CD4-positive, alpha-beta T cell (primary cell): ENCODE measurements at regions of chr9 and their contacts with region 1.

Region 1: GRCh38 chr9:111483862-111484571 is at the start of gene ECPAS:
- DNase-seq: peak; percentile 27 to 83 (median 48)
- ATAC-seq: peak; percentile 60
- H3K4me3 ChIP-seq: peak within 1 kb of the TSS; percentile 95
- H3K4me3 Mint-ChIP-seq: peak within 1 kb of the TSS; percentile 86
- H3K27ac ChIP-seq: peak within 1 kb of the TSS; percentile 62 to 78
- H3K27ac Mint-ChIP-seq: peak within 1 kb of the TSS; percentile 83
- H3K4me1 ChIP-seq: peaks cover 12% of the 10 kb centered on the region
- H3K4me1 Mint-ChIP-seq: peaks cover 26% of the 10 kb centered on the region
- H3K27me3 ChIP-seq: no peaks in the 10 kb centered on the region
- H3K27me3 Mint-ChIP-seq: no peaks in the 10 kb centered on the region
- CTCF ChIP-seq: no peak
- total RNA-seq, gene ECPAS: 36.6 to 37.5 TPM

Region 2: DNA sequence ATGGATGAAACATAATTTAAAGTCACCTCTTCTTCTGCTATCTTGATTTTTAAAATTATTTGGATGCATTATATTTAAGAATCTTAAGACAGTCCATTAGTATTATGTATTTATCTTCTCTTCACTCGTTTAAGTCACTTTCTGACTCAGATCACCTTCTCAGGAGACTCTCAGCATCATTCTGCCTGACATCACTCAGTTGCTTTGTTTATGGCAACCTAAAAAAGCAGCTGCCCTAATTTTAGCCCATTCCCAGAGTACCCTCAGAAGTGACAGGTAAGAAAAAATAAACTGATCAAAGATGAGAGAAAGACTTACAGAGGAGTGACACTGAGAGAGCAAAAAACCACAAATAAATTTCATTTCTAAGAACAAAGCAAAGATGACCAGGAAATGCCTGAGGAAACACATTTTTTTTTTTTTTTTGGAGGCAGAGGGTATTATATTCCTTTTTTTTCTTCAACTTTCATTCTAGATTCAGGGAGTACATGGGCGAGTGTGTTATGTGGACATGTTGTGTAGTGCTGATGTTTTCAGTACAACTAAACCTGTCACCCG is 674.9 kb before region 1 on chr9:
- CTCF ChIA-PET with region 1: no interaction called
- POLR2A ChIA-PET with region 1: no interaction called
- intact Hi-C with region 1: no loop called
- DNase-seq: no peak
- ATAC-seq: no peak
- H3K4me3 ChIP-seq: no peak overlapping the region
- H3K4me3 Mint-ChIP-seq: no peak overlapping the region
- H3K27ac ChIP-seq: no peak overlapping the region
- H3K27ac Mint-ChIP-seq: no peak overlapping the region
- H3K4me1 ChIP-seq: no peaks in the 10 kb centered on the region
- H3K4me1 Mint-ChIP-seq: no peaks in the 10 kb centered on the region
- H3K27me3 ChIP-seq: no peaks in the 10 kb centered on the region
- H3K27me3 Mint-ChIP-seq: peaks cover 6% of the 10 kb centered on the region
- CTCF ChIP-seq: no peak

Region 3: GRCh38 chr9:111294691-111295451 is 189.1 kb before region 1 on chr9:
- CTCF ChIA-PET with region 1: no interaction called
- POLR2A ChIA-PET with region 1: no interaction called
- intact Hi-C with region 1: no loop called
- DNase-seq: no peak
- ATAC-seq: no peak
- H3K4me3 ChIP-seq: no peak overlapping the region
- H3K4me3 Mint-ChIP-seq: no peak overlapping the region
- H3K27ac ChIP-seq: no peak overlapping the region
- H3K27ac Mint-ChIP-seq: no peak overlapping the region
- H3K4me1 ChIP-seq: no peaks in the 10 kb centered on the region
- H3K4me1 Mint-ChIP-seq: no peaks in the 10 kb centered on the region
- H3K27me3 ChIP-seq: no peaks in the 10 kb centered on the region
- H3K27me3 Mint-ChIP-seq: peaks cover 18% of the 10 kb centered on the region
- CTCF ChIP-seq: no peak

Region 4: GRCh38 chr9:111412280-111412679 is 71.7 kb before region 1 on chr9:
- CTCF ChIA-PET with region 1: no interaction called
- POLR2A ChIA-PET with region 1: no interaction called
- intact Hi-C with region 1: no loop called
- DNase-seq: no peak
- ATAC-seq: no peak
- H3K4me3 ChIP-seq: no peak overlapping the region
- H3K4me3 Mint-ChIP-seq: no peak overlapping the region
- H3K27ac ChIP-seq: no peak overlapping the region
- H3K27ac Mint-ChIP-seq: no peak overlapping the region
- H3K4me1 ChIP-seq: no peaks in the 10 kb centered on the region
- H3K4me1 Mint-ChIP-seq: no peaks in the 10 kb centered on the region
- H3K27me3 ChIP-seq: no peaks in the 10 kb centered on the region
- H3K27me3 Mint-ChIP-seq: no peaks in the 10 kb centered on the region
- CTCF ChIP-seq: no peak

Region 5: GRCh38 chr9:111525056-111525977 is 41.3 kb after region 1 on chr9 and contains the start of gene ZNF483:
- CTCF ChIA-PET with region 1: interaction called, 4 read pairs
- POLR2A ChIA-PET with region 1: interaction called, 46 read pairs
- intact Hi-C with region 1: loop called (anchors 1 to 2 kb)
- DNase-seq: peak; percentile 54 to 90 (median 68)
- ATAC-seq: peak; percentile 90
- H3K4me3 ChIP-seq: peak within 1 kb of the TSS; percentile 93
- H3K4me3 Mint-ChIP-seq: peak within 1 kb of the TSS; percentile 97
- H3K27ac ChIP-seq: peak within 1 kb of the TSS; percentile 67 to 70
- H3K27ac Mint-ChIP-seq: peak within 1 kb of the TSS; percentile 97
- H3K4me1 ChIP-seq: peaks cover 19% of the 10 kb centered on the region
- H3K4me1 Mint-ChIP-seq: peaks cover 23% of the 10 kb centered on the region
- H3K27me3 ChIP-seq: peaks cover 0 to 2% of the 10 kb centered on the region in 2 experiments
- H3K27me3 Mint-ChIP-seq: no peaks in the 10 kb centered on the region
- CTCF ChIP-seq: no peak
- total RNA-seq, gene ZNF483: 28.5 to 32.9 TPM